Naive thymus-derived CD8-positive, alpha-beta T cell (primary cell): ENCODE measurements at regions of chr15 and their contacts with region 1.

Region 1: GRCh38 chr15:52039925-52040781 is 21.1 kb downstream of the MAPK6 start:
- DNase-seq: no peak
- ATAC-seq: peak in 1 of 2 donors; percentile 18
- H3K4me3 Mint-ChIP-seq: peak overlapping the region in 4 of 10 donors; percentile 3 to 31 (median 5)
- H3K27ac Mint-ChIP-seq: peak overlapping the region; percentile 41 to 83 (median 66)
- H3K4me1 Mint-ChIP-seq: peaks cover 26 to 68% (median 61%) of the 10 kb centered on the region in 4 donors
- H3K27me3 Mint-ChIP-seq: no peaks in the 10 kb centered on the region

Region 2: GRCh38 chr15:52019388-52020220 is 20.5 kb before region 1 on chr15:
- POLR2A ChIA-PET with region 1: interaction called, 22 read pairs
- DNase-seq: peak; percentile 25 to 77 (median 48)
- ATAC-seq: peak; percentile 64 to 68
- H3K4me3 Mint-ChIP-seq: peak overlapping the region; percentile 93 to 99 (median 96)
- H3K27ac Mint-ChIP-seq: peak overlapping the region; percentile 92 to 99 (median 98)
- H3K4me1 Mint-ChIP-seq: peaks cover 11 to 43% (median 36%) of the 10 kb centered on the region in 4 donors
- H3K27me3 Mint-ChIP-seq: no peaks in the 10 kb centered on the region